Tibial artery (tissue), 4 donors: ENCODE measurements at regions of chr11 and their contacts with region 1.

Region 1: GRCh38 chr11:118956094-118956846 is at the start of gene UPK2:
- DNase-seq: peak; percentile 84 to 91
- H3K4me3 ChIP-seq: no peak within 1 kb of the TSS
- H3K27ac ChIP-seq: no peak within 1 kb of the TSS
- H3K4me1 ChIP-seq: no peaks in the 10 kb centered on the region
- H3K27me3 ChIP-seq: peaks cover 0 to 18% of the 10 kb centered on the region in 2 donors
- CTCF ChIP-seq: peak; percentile 91 to 99

Region 2: GRCh38 chr11:118907051-118908042 is 48.9 kb before region 1 on chr11:
- intact Hi-C with region 1: loop called (anchors 1 kb)
- DNase-seq: peak; percentile 85 to 93
- H3K4me3 ChIP-seq: peak overlapping the region in 1 of 2 donors; percentile 1
- H3K27ac ChIP-seq: peak overlapping the region; percentile 85 to 99
- H3K4me1 ChIP-seq: peaks cover 5 to 76% (median 64%) of the 10 kb centered on the region in 4 donors
- H3K27me3 ChIP-seq: no peaks in the 10 kb centered on the region
- CTCF ChIP-seq: peak; percentile 87 to 98